ENCODE measurements at regions of chr15 and their contacts with region 1.

Region 1: DNA sequence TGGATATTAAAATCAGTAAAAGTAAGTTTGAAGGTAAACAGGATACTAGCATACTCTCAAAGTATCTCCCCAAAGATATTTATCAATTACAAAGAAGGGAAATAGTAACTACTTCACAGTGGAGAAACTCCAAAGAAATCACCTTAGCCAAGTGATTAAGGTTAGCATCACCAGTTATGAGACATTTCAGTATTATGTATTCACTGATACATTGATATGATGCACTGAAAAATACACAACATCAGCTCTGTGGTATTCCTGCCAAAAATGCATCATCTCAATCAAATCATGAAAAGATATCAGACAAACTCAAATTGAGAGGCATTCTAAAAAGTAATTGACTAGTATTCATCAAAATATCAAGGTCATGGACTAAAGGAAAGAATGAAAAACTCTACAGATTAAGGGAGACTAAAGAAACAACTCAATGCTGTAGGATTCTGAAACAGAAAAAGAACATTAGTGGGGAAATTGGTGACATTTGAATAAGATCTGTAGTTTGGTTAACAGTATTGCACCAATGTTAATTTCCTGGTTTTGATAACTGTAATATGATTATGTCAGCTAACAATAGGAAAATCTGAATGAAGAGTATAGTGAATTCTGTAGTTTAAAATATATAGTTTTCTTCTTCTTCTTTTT is 215.4 kb downstream of the UACA start:
- DNase-seq: no peak
- ATAC-seq: no peak
- H3K4me3 ChIP-seq: no peak overlapping the region
- H3K27ac ChIP-seq: no peak overlapping the region
- H3K4me1 ChIP-seq: no peaks in the 10 kb centered on the region
- H3K27me3 ChIP-seq: no peaks in the 10 kb centered on the region
- CTCF ChIP-seq: no peak

Region 2: GRCh38 chr15:70504299-70504951 is 43.5 kb before region 1 on chr15:
- CTCF ChIA-PET with region 1: no interaction called
- POLR2A ChIA-PET with region 1: no interaction called
- in situ Hi-C with region 1: no loop called
- intact Hi-C with region 1: no loop called
- DNase-seq: no peak
- ATAC-seq: peak; percentile 54
- H3K4me3 ChIP-seq: no peak overlapping the region
- H3K27ac ChIP-seq: peak overlapping the region; percentile 92
- H3K4me1 ChIP-seq: peaks cover 87% of the 10 kb centered on the region
- H3K27me3 ChIP-seq: no peaks in the 10 kb centered on the region
- CTCF ChIP-seq: no peak

Region 3: DNA sequence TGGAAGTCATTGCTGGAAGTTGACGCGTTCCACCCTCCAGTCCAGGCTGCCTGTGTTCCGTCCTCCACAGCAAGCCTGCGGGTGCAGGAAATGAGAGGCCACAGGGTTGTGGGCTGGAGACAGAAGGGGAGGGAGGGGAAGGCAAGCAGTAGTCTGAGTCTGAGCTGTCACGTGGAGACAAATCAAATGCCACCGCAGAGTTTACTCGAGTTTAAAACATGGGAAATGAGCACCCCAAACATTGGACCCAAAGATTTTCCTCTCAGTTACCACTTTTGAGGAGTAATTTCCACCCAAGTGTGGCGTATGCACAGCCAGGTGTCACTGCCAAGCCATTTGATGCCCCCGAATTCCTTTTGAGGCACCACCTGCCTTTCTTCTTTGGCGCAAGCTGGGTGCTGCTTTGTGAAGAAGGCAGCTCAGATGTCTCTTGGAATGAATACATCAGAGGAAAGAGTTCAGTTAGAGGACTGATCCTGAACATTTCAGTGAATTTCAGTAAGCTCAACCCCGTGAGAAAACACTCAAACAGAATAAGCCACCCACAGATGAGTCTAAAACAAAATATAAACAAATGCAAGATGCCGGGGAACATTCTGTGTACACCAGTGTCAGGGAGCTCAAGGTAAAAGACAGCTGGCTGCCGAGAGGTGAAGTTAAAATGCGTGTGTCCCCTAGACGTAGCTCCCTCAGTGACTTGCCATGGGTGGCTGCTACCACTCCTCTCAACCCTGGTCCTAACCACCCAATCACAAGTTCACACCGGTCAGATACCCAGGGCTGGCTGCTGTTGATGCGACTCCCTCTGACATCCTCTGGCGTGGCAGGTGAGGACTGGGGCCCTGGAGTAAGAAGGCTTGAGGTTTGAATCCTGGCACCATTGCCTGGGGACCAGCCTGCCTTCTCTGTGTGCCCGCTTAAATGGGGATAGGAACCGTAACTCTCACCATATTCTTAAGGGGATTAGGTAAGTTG is 11.6 kb after region 1 on chr15:
- CTCF ChIA-PET with region 1: no interaction called
- POLR2A ChIA-PET with region 1: no interaction called
- in situ Hi-C with region 1: no loop called
- intact Hi-C with region 1: no loop called
- DNase-seq: no peak
- ATAC-seq: no peak
- H3K4me3 ChIP-seq: no peak overlapping the region
- H3K27ac ChIP-seq: no peak overlapping the region
- H3K4me1 ChIP-seq: no peaks in the 10 kb centered on the region; the same call in 1 of the 2 replicates
- H3K27me3 ChIP-seq: no peaks in the 10 kb centered on the region
- CTCF ChIP-seq: no peak

Region 4: GRCh38 chr15:70833897-70834765 is 286.2 kb after region 1 on chr15:
- CTCF ChIA-PET with region 1: no interaction called
- POLR2A ChIA-PET with region 1: interaction called, 12 read pairs
- in situ Hi-C with region 1: no loop called
- intact Hi-C with region 1: no loop called
- DNase-seq: no peak
- ATAC-seq: peak; percentile 70
- H3K4me3 ChIP-seq: no peak overlapping the region
- H3K27ac ChIP-seq: peak overlapping the region; percentile 62; the same call in 1 of the 2 replicates
- H3K4me1 ChIP-seq: peaks cover 11% of the 10 kb centered on the region
- H3K27me3 ChIP-seq: no peaks in the 10 kb centered on the region
- CTCF ChIP-seq: no peak